ENCODE measurements at regions of chr3 and their contacts with region 1.

Region 1: DNA sequence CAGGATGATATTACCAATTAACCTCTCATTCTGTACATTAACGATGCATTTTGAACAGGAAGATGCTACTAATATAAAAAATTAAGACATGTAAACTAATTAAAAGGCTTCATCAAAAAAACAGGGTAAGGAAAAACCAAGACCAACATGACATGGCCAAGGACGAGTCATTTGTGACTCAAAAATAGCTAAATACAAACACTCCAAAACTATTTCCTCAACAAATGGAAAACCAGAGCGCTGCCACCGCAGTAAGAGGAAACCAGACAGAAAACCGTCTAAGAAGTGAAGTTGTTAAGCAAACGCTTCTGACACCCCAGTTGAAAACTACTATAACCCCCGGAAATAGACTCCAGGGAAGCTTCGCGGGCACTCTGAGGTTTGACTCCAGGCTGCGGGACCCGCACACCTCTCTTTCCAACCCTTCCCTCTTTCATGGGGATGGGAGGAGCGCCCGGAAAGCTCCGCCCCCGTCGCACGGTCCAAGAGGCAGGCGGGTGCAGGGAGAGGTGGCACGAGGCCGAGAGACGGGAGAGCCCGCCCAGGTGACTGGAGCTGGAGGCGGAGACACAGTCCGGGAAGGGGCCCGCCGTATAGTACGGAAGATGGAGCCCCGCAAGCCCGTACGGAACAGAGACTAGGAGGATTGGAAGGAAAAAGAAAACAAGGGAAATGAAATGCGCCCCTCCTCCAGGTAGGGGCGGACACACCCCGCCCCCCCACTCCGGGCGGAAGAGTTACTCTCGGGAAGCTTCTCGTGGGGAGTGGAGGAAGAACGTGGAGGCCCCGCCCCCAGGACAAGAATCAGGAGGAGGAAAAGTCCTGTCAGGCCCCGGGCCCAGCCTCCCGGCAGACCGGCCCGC is 708 bp downstream of the DCAF1 start:
- DNase-seq: peak; percentile 89 to 93
- ATAC-seq: peak; percentile 77 to 78
- H3K4me3 ChIP-seq: peak overlapping the region; percentile 73 to 85 (median 76)
- H3K27ac ChIP-seq: peak overlapping the region; percentile 93 to 98 (median 96)
- H3K4me1 ChIP-seq: peaks cover 9% of the 10 kb centered on the region in 2 donors
- H3K27me3 ChIP-seq: no peaks in the 10 kb centered on the region
- CTCF ChIP-seq: no peak
- POLR2A ChIP-seq: peak; percentile 70

Region 2: DNA sequence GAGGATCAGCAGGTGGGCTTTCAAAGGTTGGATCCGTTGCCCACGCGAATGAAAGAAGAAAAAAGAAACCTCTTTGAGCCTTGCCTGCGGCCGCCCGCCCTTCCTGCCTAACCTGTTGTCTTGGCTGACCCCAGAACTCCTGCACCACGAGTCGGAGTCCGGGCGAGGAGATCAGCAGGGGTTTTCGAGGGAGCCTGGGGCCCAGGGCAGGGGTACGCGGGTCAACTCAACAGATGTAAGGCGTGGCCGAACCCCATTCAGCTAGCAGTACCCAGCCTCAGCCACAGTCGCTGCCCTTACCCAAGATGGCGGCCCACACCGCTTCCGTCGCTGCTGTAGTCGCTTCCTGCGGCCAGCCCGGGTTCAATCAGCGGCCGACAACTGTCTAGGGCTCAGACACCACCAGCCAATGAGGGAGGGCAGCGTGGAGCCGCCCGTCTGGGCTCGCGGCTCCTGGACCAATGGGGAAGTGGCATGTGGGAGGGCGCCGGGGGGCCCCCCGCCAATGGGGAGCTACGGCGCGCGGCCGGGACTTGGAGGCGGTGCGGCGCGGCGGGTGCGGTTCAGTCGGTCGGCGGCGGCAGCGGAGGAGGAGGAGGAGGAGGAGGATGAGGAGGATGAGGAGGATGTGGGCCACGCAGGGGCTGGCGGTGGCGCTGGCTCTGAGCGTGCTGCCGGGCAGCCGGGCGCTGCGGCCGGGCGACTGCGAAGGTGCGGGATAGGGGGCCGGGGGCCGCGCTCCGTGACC is 114.2 kb before region 1 on chr3 and contains the start of gene MANF:
- in situ Hi-C with region 1: loop called in 2 of 4 experiments (anchors 5 to 10 kb)
- intact Hi-C with region 1: no loop called
- DNase-seq: peak; percentile 98
- ATAC-seq: peak; percentile 96 to 97
- H3K4me3 ChIP-seq: peak within 1 kb of the TSS; percentile 73 to 96 (median 94)
- H3K27ac ChIP-seq: peak within 1 kb of the TSS; percentile 91 to 98 (median 92)
- H3K4me1 ChIP-seq: peaks cover 25 to 28% of the 10 kb centered on the region in 2 donors
- H3K27me3 ChIP-seq: no peaks in the 10 kb centered on the region
- CTCF ChIP-seq: peak in 3 of 5 experiments; percentile 14 to 24 (median 20)
- POLR2A ChIP-seq: peak; percentile 88 to 95
- total RNA-seq, gene MANF: 4.4 to 19.7 (median 11.5) TPM

Region 3: GRCh38 chr3:51538459-51539290 is 39.6 kb after region 1 on chr3 and contains the start of gene RAD54L2:
- in situ Hi-C with region 1: no loop called
- intact Hi-C with region 1: loop called (anchors 2 kb)
- DNase-seq: peak; percentile 68 to 72
- ATAC-seq: peak; percentile 94 to 95
- H3K4me3 ChIP-seq: peak within 1 kb of the TSS; percentile 82 to 96 (median 88)
- H3K27ac ChIP-seq: peak within 1 kb of the TSS; percentile 85 to 96 (median 93)
- H3K4me1 ChIP-seq: peaks cover 15 to 27% of the 10 kb centered on the region in 2 donors
- H3K27me3 ChIP-seq: no peaks in the 10 kb centered on the region
- CTCF ChIP-seq: peak in 3 of 5 experiments; percentile 9 to 51 (median 33)
- POLR2A ChIP-seq: peak; percentile 42 to 62
- total RNA-seq, gene RAD54L2: 8.8 to 11.2 (median 10.4) TPM

Region 4: DNA sequence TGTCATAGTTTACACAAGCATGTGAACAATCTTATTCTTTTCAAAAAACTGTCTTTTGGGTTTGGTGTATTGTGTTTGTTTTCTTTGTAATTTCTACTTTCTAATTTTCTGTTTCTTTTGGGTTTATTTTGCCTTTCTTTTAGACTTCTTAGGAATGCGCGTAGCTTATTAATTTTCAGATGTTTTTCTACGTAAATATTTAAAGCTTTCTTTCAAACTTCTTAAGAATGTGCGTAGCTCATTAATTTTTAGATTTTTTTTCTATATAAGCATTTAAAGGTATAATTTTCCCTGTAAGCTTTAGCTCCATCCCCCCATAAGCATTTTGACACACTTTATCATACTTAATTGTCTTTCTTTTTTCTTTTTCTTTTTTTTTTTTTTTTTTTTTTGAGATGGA is 94.6 kb after region 1 on chr3:
- in situ Hi-C with region 1: no loop called
- intact Hi-C with region 1: no loop called
- DNase-seq: no peak
- ATAC-seq: no peak
- H3K4me3 ChIP-seq: no peak overlapping the region
- H3K27ac ChIP-seq: no peak overlapping the region
- H3K4me1 ChIP-seq: no peaks in the 10 kb centered on the region
- H3K27me3 ChIP-seq: no peaks in the 10 kb centered on the region
- CTCF ChIP-seq: no peak
- POLR2A ChIP-seq: no peak

Region 5: DNA sequence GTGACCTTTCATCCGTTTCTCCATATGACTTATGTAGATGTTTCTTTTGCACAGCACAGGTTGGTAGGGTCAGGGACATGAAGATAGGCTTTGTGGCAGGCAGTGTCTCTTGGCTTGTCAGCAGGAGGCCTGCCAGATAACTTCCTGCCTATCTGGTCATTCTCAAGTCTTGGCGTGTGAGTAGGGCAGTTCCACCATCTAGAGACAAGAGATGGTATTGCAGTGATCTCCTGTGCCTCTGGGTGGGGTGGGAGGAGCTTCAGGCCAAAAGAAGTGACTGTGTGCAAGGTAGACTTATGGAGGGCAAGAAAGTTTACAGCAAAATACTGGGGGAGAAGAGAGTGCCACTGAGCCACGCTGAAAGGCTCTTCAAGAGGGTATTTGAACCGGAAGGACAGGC is 183.0 kb after region 1 on chr3:
- in situ Hi-C with region 1: loop called in 1 of 4 experiments (anchors 5 kb)
- intact Hi-C with region 1: no loop called
- DNase-seq: peak; percentile 41 to 69
- ATAC-seq: peak; percentile 77 to 91
- H3K4me3 ChIP-seq: no peak overlapping the region
- H3K27ac ChIP-seq: no peak overlapping the region
- H3K4me1 ChIP-seq: peaks cover 29 to 45% of the 10 kb centered on the region in 2 donors
- H3K27me3 ChIP-seq: no peaks in the 10 kb centered on the region
- CTCF ChIP-seq: peak; percentile 64 to 76 (median 73)
- POLR2A ChIP-seq: no peak